Calu3 (cell line): ENCODE measurements at regions of chr10 and their contacts with region 1.

Region 1: DNA sequence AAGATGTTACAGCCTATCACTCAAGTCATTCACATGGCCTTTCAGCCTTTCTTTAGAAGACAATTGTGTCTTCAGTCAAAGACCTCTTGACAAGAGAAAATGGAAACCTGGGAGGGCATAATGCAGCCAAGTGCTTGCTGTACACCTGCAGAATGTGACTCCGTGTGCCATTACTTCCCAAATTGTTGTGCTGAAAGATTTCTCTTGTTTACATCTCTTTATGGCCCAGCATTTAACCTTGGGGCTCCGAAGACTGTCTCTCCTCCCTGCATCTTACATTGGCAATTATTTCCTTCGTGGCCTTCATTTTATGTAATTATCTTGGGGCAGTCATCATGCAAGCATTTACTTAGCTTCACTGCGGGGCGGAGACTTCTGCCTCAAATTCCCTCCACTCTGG is 287.0 kb downstream of the TCF7L2 start:
- DNase-seq: no peak
- H3K4me3 Mint-ChIP-seq: no peak overlapping the region
- H3K27ac Mint-ChIP-seq: no peak overlapping the region
- H3K4me1 Mint-ChIP-seq: no peaks in the 10 kb centered on the region
- H3K27me3 Mint-ChIP-seq: peaks cover 73% of the 10 kb centered on the region
- CTCF ChIP-seq: no peak

Region 2: DNA sequence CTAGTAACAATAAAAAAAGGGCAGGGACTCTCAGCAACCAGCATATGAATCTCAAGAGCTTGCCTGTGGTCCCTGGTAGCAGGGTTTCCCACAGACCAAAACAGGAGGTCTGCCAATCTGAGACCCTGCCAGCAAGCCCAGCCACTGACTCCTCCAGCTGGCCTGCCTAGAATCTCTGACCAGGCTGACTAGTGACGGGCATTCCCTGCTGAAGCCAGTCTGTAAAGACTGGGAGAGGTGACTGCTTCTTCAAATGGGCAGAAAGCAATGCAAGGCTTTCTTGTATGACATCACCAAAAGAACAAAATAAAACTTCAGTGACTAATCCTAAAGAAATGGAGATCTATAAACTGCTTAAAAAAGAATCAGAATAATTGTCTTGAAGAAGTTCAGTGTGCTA is 37.5 kb before region 1 on chr10:
- CTCF ChIA-PET with region 1: no interaction called
- intact Hi-C with region 1: loop called (anchors 1 kb)
- DNase-seq: no peak
- H3K4me3 Mint-ChIP-seq: no peak overlapping the region
- H3K27ac Mint-ChIP-seq: no peak overlapping the region
- H3K4me1 Mint-ChIP-seq: no peaks in the 10 kb centered on the region
- H3K27me3 Mint-ChIP-seq: peaks cover 4% of the 10 kb centered on the region
- CTCF ChIP-seq: no peak

Region 3: GRCh38 chr10:113415246-113415645 is 178.2 kb after region 1 on chr10:
- CTCF ChIA-PET with region 1: no interaction called
- intact Hi-C with region 1: no loop called
- DNase-seq: no peak
- H3K4me3 Mint-ChIP-seq: no peak overlapping the region
- H3K27ac Mint-ChIP-seq: no peak overlapping the region
- H3K4me1 Mint-ChIP-seq: no peaks in the 10 kb centered on the region
- H3K27me3 Mint-ChIP-seq: peaks cover 80% of the 10 kb centered on the region
- CTCF ChIP-seq: no peak